Heart left ventricle (tissue), 16 donors: ENCODE measurements at regions of chr11 and their contacts with region 1.

Region 1: DNA sequence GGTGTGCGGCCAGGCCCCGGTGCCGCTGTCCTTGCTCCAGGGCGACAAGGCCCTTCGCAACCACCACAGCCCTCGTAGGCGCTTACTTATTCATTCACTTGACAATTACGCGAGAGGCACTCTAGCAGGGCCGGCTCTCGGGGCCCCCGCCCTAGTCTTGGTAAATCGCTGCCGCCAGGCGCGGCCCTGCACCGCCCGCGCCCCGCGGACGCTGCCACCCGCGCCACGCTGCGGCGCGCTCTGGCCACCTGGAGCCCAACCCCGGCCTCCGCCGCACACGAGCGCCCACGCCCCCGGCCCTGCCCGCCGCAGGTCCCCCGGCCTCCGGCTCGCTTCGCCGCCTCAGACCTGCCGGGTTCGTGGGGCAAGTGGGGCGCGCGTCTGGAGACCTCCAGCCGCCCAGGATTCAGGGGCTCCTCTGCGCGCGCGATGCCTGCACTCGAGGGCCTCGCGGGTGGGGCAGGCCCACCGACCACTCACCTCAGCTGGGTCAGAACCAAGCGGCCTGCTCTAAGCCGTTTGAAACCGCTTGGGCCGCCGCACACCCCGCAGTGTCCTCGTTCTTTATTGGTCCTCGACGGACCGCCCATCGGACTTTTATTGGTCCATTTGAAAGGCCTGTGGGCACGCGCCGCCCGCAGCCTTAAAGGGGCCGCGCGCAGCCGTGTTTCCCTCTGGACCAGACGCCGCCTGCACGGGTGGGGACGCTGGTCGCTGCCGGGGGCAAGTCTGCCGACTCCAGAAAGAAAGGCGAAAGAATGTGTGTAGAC is at the start of gene CKAP5:
- DNase-seq: peak; percentile 91 to 94 (median 92)
- ATAC-seq: peak; percentile 96 to 99 (median 99)
- H3K4me3 ChIP-seq: peak within 1 kb of the TSS; percentile 48 to 100 (median 88)
- H3K27ac ChIP-seq: peak within 1 kb of the TSS; percentile 27 to 88 (median 80)
- H3K4me1 ChIP-seq: peaks cover 0 to 26% (median 17%) of the 10 kb centered on the region in 12 donors
- H3K27me3 ChIP-seq: no peaks in the 10 kb centered on the region
- CTCF ChIP-seq: no peak
- POLR2A ChIP-seq: peak in 1 of 2 donors; percentile 72
- total RNA-seq, gene CKAP5: 41.7 to 108 (median 76.0) TPM

Region 2: GRCh38 chr11:46826310-46827044 is 19.4 kb before region 1 on chr11:
- intact Hi-C with region 1: loop called in 3 of 10 experiments (anchors 2 kb)
- DNase-seq: peak; percentile 85 to 92 (median 89)
- ATAC-seq: peak; percentile 96 to 99 (median 98)
- H3K4me3 ChIP-seq: peak overlapping the region; percentile 38 to 79 (median 68)
- H3K27ac ChIP-seq: peak overlapping the region; percentile 42 to 88 (median 80)
- H3K4me1 ChIP-seq: peaks cover 0 to 47% (median 32%) of the 10 kb centered on the region in 12 donors
- H3K27me3 ChIP-seq: no peaks in the 10 kb centered on the region
- CTCF ChIP-seq: peak in 5 of 12 donors; percentile 18 to 43 (median 26)
- POLR2A ChIP-seq: peak in 1 of 2 donors; percentile 39

Region 3: GRCh38 chr11:47715082-47715669 is 869.3 kb after region 1 on chr11 and contains the start of gene AGBL2:
- intact Hi-C with region 1: no loop called
- DNase-seq: peak; percentile 71 to 90 (median 78)
- ATAC-seq: peak; percentile 78 to 95 (median 94)
- H3K4me3 ChIP-seq: peak within 1 kb of the TSS; percentile 56 to 90 (median 76)
- H3K27ac ChIP-seq: peak within 1 kb of the TSS in 11 of 12 donors; percentile 47 to 88 (median 69)
- H3K4me1 ChIP-seq: peaks cover 0 to 11% (median 1%) of the 10 kb centered on the region in 12 donors
- H3K27me3 ChIP-seq: no peaks in the 10 kb centered on the region
- CTCF ChIP-seq: no peak
- POLR2A ChIP-seq: peak in 1 of 2 donors; percentile 55
- total RNA-seq, gene AGBL2: 0.37 to 1.4 (median 0.40) TPM in 3 of 9 donors, not detected in the others